Mammary epithelial cell (primary cell): ENCODE measurements at regions of chr20 and their contacts with region 1.

Region 1: DNA sequence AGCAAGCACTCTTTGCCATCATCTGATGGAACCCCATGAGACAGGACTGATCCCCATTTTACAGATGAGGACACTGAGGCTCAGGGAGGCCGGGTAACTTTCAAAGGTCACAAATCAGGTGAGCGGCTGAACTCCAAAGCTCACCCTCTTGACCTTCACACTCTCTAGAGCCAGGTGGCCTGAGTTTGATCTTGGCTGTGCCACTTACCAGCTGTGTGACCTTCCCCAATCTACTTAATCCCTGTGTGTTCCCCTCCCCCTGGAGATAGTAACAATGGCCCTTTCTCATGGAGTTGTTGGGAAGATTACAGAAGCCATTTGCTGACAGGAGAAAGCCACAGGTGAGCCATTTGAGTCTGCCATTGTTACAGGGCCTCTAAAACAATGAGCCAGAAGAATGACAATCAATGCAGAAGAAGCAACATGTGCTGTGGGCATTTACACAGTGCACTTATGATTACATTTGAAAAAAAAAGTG is 34.5 kb downstream of the BMP7 start:
- DNase-seq: no peak
- H3K4me3 ChIP-seq: no peak overlapping the region
- H3K27ac ChIP-seq: no peak overlapping the region
- H3K4me1 ChIP-seq: no peaks in the 10 kb centered on the region
- H3K27me3 ChIP-seq: peaks cover 4% of the 10 kb centered on the region
- CTCF ChIP-seq: no peak

Region 2: DNA sequence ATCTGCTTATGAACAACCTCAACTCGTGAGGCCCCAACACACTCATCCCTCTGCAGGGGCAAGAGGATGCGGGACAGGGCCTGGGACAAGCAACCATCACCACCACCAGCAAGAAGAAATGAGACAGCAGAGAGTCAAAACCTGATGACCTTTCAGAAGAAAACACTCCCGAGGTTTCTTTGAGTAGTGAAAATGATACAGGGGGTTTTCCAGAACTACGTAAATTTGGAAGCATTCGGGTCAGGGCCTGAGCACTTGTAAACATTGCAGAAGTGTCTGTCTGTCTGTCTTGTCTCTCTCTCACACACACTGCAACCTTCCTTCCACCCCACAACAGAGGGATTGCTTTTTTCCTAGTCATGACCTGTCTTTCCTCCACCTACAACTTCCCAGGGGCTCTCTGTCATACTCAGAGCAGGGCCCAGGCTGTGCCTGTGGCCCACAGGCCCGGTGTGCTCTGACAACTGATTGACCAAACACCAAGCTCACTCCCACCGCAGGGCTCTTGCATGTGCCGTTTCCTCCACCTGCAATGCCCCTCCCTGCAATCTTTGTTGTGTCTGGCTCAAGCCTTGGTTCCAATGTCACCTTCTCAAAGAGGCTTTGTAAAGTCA is 56.5 kb before region 1 on chr20:
- CTCF ChIA-PET with region 1: no interaction called
- dilution Hi-C with region 1: no loop called
- in situ Hi-C with region 1: no loop called
- intact Hi-C with region 1: no loop called
- DNase-seq: peak; percentile 35
- H3K4me3 ChIP-seq: no peak overlapping the region
- H3K27ac ChIP-seq: no peak overlapping the region
- H3K4me1 ChIP-seq: peaks cover 13% of the 10 kb centered on the region
- H3K27me3 ChIP-seq: no peaks in the 10 kb centered on the region
- CTCF ChIP-seq: no peak

Region 3: GRCh38 chr20:57195469-57196100 is 36.4 kb before region 1 on chr20:
- CTCF ChIA-PET with region 1: no interaction called
- dilution Hi-C with region 1: loop called (anchors 5 kb)
- in situ Hi-C with region 1: no loop called
- intact Hi-C with region 1: no loop called
- DNase-seq: peak; percentile 91
- H3K4me3 ChIP-seq: no peak overlapping the region
- H3K27ac ChIP-seq: no peak overlapping the region
- H3K4me1 ChIP-seq: peaks cover 17% of the 10 kb centered on the region
- H3K27me3 ChIP-seq: no peaks in the 10 kb centered on the region
- CTCF ChIP-seq: no peak

Region 4: DNA sequence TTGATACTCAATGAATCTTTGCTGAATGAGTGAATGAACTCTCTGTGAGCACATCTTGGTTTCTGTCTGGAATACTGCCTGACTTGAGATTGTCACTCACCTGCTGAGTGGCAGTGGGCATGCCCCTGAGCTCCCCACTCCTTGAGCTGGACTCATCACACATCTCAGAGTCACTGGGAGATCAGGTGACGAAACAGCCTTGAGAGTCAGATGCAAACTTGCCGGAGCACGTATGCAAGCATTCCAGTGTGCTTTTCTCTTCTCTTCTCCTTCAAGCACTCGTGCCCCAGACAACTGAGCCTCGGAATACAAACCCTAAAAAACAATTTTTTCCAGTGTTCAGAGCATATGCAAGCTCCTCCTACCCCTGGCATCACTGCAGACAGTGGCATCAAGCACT is 43.8 kb after region 1 on chr20:
- CTCF ChIA-PET with region 1: no interaction called
- dilution Hi-C with region 1: loop called (anchors 5 kb)
- in situ Hi-C with region 1: no loop called
- intact Hi-C with region 1: no loop called
- DNase-seq: peak; percentile 63
- H3K4me3 ChIP-seq: no peak overlapping the region
- H3K27ac ChIP-seq: no peak overlapping the region
- H3K4me1 ChIP-seq: no peaks in the 10 kb centered on the region
- H3K27me3 ChIP-seq: peaks cover 7% of the 10 kb centered on the region
- CTCF ChIP-seq: no peak

Region 5: DNA sequence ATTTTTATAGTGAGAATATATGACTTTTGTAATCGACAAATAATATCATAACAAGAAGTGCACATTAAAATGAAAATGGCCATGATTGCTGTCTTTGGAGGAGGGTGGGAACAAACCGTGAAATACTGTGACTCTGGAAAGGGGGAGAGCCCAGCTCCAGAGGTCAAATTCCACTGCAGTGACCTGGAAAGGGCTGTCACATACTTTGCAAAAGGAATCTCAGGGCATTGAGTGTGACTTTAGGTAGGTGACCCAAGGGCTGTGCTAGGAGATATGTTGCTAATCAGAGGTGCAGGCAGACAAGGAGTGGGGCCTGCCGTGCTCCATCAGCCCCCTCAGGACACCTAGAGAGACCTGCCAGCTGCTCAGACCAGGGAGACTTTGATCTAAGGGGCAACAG is 62.6 kb after region 1 on chr20:
- CTCF ChIA-PET with region 1: no interaction called
- dilution Hi-C with region 1: no loop called
- in situ Hi-C with region 1: no loop called
- intact Hi-C with region 1: no loop called
- DNase-seq: no peak
- H3K4me3 ChIP-seq: no peak overlapping the region
- H3K27ac ChIP-seq: no peak overlapping the region
- H3K4me1 ChIP-seq: no peaks in the 10 kb centered on the region
- H3K27me3 ChIP-seq: peaks cover 3% of the 10 kb centered on the region
- CTCF ChIP-seq: no peak